Left cardiac atrium (tissue), 4 donors: ENCODE measurements at regions of chr14 and their contacts with region 1.

Region 1: DNA sequence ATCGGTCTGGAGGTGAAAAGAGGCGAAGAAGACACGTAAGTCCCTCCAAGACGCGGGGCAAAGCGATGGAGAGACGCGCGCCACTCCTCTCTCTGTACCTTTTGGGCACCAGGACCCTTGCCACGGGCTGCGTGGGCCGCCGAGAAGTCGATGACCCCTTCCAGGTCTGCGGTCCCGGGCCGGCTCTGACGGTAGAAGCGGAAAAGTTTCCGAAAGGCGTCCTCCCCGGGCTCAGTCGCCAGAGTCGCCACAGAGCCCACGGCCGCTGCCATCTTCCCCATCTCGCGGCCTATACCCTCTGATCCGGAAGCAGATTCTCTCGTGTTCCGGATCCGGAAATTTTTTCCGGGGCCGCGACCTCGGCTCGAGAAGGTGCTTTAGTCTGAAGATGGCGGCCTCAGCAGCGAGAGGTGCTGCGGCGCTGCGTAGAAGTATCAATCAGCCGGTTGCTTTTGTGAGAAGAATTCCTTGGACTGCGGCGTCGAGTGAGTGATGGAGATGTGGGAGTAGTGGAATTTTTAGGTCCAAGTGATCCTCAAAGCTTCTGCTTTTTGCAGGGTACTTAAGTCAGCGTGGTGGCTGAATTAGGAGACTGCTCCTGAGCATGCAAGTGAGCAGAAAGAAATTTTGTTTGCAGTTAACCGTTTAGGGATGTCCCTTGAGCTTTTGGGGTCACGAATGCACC is at the starts of genes ALKBH1 and SLIRP:
- DNase-seq: peak; percentile 91
- ATAC-seq: peak; percentile 98
- total RNA-seq, gene ALKBH1: 9.8 to 10.6 TPM
- total RNA-seq, gene SLIRP: 144 to 164 TPM

Region 2: DNA sequence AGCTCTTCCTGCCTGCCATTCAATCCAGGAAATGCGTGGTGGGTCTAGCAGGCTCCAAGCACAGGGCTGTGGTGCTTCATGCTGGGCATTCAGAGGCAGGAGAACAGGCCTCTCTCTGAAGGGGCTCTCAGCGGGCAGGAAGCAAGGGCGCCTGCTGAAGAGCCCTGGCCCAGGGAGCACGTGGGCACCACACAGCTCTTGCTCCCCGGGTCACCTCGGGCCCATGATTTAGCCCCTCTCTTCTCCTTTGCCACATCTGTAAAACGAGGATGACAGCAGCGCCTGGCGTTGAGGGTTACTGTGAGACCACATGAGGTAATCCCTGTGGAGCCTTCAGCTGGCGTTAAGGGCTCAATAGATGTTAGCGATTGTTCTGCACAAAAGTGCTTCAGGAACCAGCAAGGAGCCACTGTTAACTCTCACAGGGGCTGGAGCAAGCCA is 53.8 kb before region 1 on chr14:
- intact Hi-C with region 1: loop called in 1 of 2 experiments (anchors 2 kb)
- DNase-seq: no peak
- ATAC-seq: no peak

Region 3: DNA sequence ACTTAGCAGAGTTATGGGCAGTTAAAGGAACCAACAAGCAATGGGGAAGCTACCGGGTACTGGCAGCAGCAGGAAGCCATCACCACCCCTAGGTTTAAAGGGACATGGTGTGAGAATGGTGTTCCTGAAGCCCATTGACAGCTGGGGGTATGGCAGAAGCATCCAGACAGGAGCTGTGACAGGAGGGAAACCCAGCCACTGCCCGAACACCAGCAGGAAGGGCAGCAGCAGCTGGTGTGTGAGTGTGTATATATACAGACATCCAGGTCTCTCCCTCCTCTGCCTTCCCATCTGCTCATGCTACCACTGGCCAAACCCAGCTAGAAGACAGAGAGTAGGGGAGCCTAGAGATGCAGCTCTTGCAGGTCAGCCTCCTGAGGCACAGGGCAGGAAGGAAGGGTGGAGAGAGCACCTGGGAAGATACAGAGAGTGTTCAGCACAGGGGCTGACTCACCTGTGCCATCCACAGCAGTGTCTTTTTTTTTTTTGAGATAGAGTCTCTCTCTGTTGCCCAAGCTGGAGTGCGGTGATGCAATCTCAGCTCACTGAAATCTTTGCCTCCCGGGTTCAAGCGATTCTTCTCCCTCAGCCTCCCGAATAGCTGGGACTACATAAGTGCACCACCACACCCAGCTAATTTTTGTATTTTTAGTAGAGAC is 82.8 kb after region 1 on chr14:
- intact Hi-C with region 1: no loop called
- DNase-seq: no peak
- ATAC-seq: no peak